SK-N-SH (cell line): ENCODE measurements at regions of chr20 and their contacts with region 1.

Region 1: GRCh38 chr20:36199345-36200257 is 36.7 kb upstream of the AAR2 start:
- DNase-seq: peak; percentile 86
- H3K4me3 ChIP-seq: peak overlapping the region in 1 of 2 experiments; percentile 46; a peak in 1 of 4 replicates
- H3K27ac ChIP-seq: peak overlapping the region in 1 of 2 experiments; percentile 94; a peak in 2 of 4 replicates
- H3K4me1 ChIP-seq: peaks cover 0 to 19% of the 10 kb centered on the region in 2 experiments; a peak in 2 of 4 replicates
- H3K27me3 ChIP-seq: no peaks in the 10 kb centered on the region
- CTCF ChIP-seq: peak; percentile 83
- EP300 ChIP-seq: peak in 1 of 2 experiments; percentile 50; a peak in 1 of 4 replicates
- RAD21 ChIP-seq: peak; percentile 90

Region 2: GRCh38 chr20:36028106-36028826 is 171.3 kb before region 1 on chr20:
- CTCF ChIA-PET with region 1: no interaction called
- POLR2A ChIA-PET with region 1: no interaction called
- DNase-seq: no peak
- H3K4me3 ChIP-seq: no peak overlapping the region
- H3K27ac ChIP-seq: no peak overlapping the region
- H3K4me1 ChIP-seq: no peaks in the 10 kb centered on the region
- H3K27me3 ChIP-seq: no peaks in the 10 kb centered on the region
- CTCF ChIP-seq: no peak
- EP300 ChIP-seq: no peak
- RAD21 ChIP-seq: no peak

Region 3: GRCh38 chr20:36145877-36146707 is 53.5 kb before region 1 on chr20:
- CTCF ChIA-PET with region 1: interaction called, 39 read pairs
- POLR2A ChIA-PET with region 1: interaction called, 3 read pairs
- DNase-seq: no peak
- H3K4me3 ChIP-seq: no peak overlapping the region
- H3K27ac ChIP-seq: no peak overlapping the region
- H3K4me1 ChIP-seq: peaks cover 0 to 12% of the 10 kb centered on the region in 2 experiments; a peak in 1 of 4 replicates
- H3K27me3 ChIP-seq: no peaks in the 10 kb centered on the region
- CTCF ChIP-seq: no peak
- EP300 ChIP-seq: no peak
- RAD21 ChIP-seq: no peak

Region 4: GRCh38 chr20:36167826-36168531 is 31.6 kb before region 1 on chr20:
- CTCF ChIA-PET with region 1: interaction called, 178 read pairs
- POLR2A ChIA-PET with region 1: no interaction called
- DNase-seq: no peak
- H3K4me3 ChIP-seq: no peak overlapping the region
- H3K27ac ChIP-seq: peak overlapping the region; percentile 11 to 44; a peak in 2 of 4 replicates
- H3K4me1 ChIP-seq: peaks cover 6 to 9% of the 10 kb centered on the region in 2 experiments; a peak in 3 of 4 replicates
- H3K27me3 ChIP-seq: no peaks in the 10 kb centered on the region
- CTCF ChIP-seq: no peak
- EP300 ChIP-seq: no peak
- RAD21 ChIP-seq: no peak

Region 5: DNA sequence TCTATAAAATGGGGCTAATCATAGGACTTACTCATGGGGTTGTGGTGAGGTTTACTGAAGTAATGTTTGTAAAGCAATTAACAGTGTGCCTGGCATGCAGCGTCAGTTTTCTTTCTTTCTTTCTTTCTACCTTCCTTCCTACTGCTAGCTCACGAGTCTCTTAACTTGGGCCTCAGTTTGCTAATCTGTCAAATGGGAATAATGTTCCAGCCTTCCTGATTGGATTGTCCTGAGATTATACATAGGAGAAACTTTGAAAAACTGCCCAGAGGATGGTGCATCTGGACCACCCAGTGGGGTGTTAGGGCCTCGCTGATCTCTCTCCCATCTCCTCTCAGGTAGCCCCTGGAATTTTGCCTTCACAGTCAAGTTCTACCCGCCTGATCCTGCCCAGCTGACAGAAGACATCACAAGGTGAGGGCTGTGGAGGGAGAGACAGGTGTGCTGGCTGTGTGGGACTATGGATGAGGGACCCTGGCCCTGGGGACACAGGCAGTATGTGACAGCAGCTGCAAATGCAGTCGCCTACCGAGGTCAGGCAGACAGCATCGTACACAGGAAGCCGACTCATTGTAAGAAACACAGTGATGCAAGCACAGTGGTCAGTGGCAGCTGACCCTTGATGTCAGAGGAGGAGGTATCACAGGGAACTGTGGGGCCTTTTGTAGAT is 17.5 kb before region 1 on chr20:
- CTCF ChIA-PET with region 1: interaction called, 28 read pairs
- POLR2A ChIA-PET with region 1: no interaction called
- DNase-seq: no peak
- H3K4me3 ChIP-seq: no peak overlapping the region
- H3K27ac ChIP-seq: no peak overlapping the region
- H3K4me1 ChIP-seq: peaks cover 0 to 14% of the 10 kb centered on the region in 2 experiments; a peak in 1 of 4 replicates
- H3K27me3 ChIP-seq: no peaks in the 10 kb centered on the region
- CTCF ChIP-seq: no peak
- EP300 ChIP-seq: no peak
- RAD21 ChIP-seq: no peak

Region 6: DNA sequence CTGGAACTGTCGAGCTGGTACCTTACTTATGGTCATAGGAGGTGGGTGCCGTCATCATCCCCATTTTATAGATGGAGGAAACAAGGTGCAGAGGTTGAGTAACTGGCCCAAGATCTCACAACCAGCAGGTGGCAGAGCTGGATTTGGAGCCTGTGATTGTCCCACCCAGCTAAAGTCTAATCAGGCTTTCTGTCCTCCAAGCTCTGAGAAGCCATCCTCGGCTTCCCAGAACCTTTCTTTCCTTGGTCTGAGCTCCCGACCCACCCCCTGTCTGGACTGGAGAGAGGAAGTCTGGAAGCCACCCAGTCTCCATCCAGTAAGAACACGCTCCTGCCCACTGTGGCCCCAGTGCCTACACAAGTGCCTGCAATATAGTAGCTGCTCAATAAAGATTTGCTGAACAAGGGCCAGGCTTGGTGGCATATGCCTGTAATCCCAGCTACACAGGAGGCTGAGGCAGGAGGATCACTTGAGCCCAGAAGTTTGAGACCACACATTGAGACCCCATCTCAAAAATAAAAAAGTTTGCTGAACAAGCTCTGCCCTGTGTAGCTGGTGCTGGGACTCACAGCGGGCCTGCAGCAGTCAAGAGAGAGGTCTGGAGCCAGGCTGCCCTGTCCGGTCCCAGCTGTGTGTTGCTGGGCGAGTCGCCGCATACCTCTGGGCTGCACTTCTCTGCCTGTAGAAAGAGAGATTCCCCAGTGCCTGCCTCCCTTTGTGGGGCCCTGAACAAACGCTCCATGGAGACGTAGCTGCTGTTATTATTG is 74.0 kb after region 1 on chr20:
- CTCF ChIA-PET with region 1: interaction called, 10 read pairs
- POLR2A ChIA-PET with region 1: no interaction called
- DNase-seq: peak; percentile 51
- H3K4me3 ChIP-seq: no peak overlapping the region
- H3K27ac ChIP-seq: no peak overlapping the region
- H3K4me1 ChIP-seq: peaks cover 0 to 15% of the 10 kb centered on the region in 2 experiments; a peak in 1 of 4 replicates
- H3K27me3 ChIP-seq: no peaks in the 10 kb centered on the region; the same call in 1 of the 2 replicates
- CTCF ChIP-seq: peak; percentile 43
- EP300 ChIP-seq: no peak
- RAD21 ChIP-seq: peak; percentile 61

Region 7: DNA sequence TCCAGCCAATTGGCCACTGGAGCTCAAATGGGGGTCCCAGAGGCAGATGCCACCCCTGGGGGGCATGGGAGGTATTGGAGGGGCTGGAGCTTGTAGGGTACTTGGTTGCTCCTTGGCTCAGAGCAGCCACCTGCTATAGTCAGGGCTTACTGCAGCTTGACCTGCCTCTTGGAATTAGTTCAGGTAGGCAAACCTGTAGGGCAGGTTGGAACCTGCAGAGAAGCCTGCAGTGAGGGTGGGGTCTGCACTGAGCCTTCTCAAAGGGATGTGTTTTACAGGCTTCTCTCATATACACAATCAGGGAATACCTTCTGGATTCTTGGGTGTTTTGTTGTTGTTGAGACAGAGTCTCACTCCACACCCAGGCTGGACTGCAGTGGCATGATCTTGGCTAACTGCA is 247.5 kb after region 1 on chr20:
- CTCF ChIA-PET with region 1: interaction called, 18 read pairs
- POLR2A ChIA-PET with region 1: no interaction called
- DNase-seq: no peak
- H3K4me3 ChIP-seq: no peak overlapping the region
- H3K27ac ChIP-seq: no peak overlapping the region
- H3K4me1 ChIP-seq: no peaks in the 10 kb centered on the region
- H3K27me3 ChIP-seq: no peaks in the 10 kb centered on the region; the same call in 1 of the 2 replicates
- CTCF ChIP-seq: no peak
- EP300 ChIP-seq: no peak
- RAD21 ChIP-seq: no peak